Mammary epithelial cell (primary cell): ENCODE measurements at regions of chr12 and their contacts with region 1.

Region 1: GRCh38 chr12:55757701-55758100 is 14.8 kb downstream of the GDF11 start:
- DNase-seq: no peak
- H3K4me3 ChIP-seq: no peak overlapping the region
- H3K27ac ChIP-seq: no peak overlapping the region
- H3K4me1 ChIP-seq: no peaks in the 10 kb centered on the region
- H3K27me3 ChIP-seq: no peaks in the 10 kb centered on the region
- CTCF ChIP-seq: no peak

Region 2: DNA sequence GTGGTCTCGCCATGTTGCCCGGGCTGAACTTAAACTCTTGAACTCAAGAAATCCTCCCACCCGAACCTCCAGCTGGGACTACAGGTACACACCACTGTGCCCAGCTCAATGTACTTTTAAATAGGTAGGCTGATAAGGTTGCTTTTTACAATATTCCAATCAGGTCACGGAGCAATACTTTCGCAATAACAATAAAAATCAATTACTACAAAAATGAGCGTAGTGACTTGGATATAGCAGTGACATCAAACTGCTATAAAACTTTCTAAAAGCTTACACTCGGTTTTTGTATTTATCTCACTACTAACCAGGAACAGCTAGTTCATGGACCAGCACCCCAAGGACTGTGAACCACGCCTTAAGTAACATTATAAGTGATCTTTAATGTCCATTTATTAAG is 49.3 kb after region 1 on chr12:
- CTCF ChIA-PET with region 1: no interaction called
- dilution Hi-C with region 1: loop called (anchors 5 kb)
- in situ Hi-C with region 1: no loop called
- intact Hi-C with region 1: no loop called
- DNase-seq: no peak
- H3K4me3 ChIP-seq: no peak overlapping the region
- H3K27ac ChIP-seq: no peak overlapping the region
- H3K4me1 ChIP-seq: peaks cover 3% of the 10 kb centered on the region
- H3K27me3 ChIP-seq: no peaks in the 10 kb centered on the region
- CTCF ChIP-seq: no peak

Region 3: GRCh38 chr12:55982319-55982936 is 224.7 kb after region 1 on chr12:
- CTCF ChIA-PET with region 1: no interaction called
- dilution Hi-C with region 1: loop called (anchors 5 kb)
- in situ Hi-C with region 1: no loop called
- intact Hi-C with region 1: no loop called
- DNase-seq: no peak
- H3K4me3 ChIP-seq: no peak overlapping the region
- H3K27ac ChIP-seq: no peak overlapping the region
- H3K4me1 ChIP-seq: peaks cover 7% of the 10 kb centered on the region
- H3K27me3 ChIP-seq: no peaks in the 10 kb centered on the region
- CTCF ChIP-seq: no peak

Region 4: DNA sequence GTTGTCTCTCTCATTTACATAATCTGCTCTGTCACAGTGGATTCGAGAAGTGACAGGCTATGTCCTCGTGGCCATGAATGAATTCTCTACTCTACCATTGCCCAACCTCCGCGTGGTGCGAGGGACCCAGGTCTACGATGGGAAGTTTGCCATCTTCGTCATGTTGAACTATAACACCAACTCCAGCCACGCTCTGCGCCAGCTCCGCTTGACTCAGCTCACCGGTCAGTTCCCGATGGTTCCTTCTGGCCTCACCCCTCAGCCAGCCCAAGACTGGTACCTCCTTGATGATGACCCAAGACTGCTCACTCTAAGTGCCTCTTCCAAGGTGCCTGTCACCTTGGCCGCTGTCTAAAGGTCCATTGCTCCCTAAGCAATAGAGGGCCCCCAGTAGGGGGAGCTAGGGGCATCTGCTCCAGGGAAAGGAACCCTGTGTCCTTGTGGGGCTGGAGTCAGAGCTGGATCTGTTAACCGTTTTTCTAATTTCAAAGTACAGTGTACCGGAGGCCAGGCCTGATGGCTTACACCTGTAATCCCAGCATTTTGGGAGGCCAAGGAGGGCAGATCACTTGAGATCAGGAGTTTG is 327.4 kb after region 1 on chr12:
- CTCF ChIA-PET with region 1: no interaction called
- dilution Hi-C with region 1: no loop called
- in situ Hi-C with region 1: no loop called
- intact Hi-C with region 1: no loop called
- DNase-seq: no peak
- H3K4me3 ChIP-seq: no peak overlapping the region
- H3K27ac ChIP-seq: no peak overlapping the region
- H3K4me1 ChIP-seq: peaks cover 11% of the 10 kb centered on the region
- H3K27me3 ChIP-seq: no peaks in the 10 kb centered on the region
- CTCF ChIP-seq: peak; percentile 46 to 59